CD8-positive, alpha-beta T cell (primary cell): ENCODE measurements at regions of chr11 and their contacts with region 1.

Region 1: DNA sequence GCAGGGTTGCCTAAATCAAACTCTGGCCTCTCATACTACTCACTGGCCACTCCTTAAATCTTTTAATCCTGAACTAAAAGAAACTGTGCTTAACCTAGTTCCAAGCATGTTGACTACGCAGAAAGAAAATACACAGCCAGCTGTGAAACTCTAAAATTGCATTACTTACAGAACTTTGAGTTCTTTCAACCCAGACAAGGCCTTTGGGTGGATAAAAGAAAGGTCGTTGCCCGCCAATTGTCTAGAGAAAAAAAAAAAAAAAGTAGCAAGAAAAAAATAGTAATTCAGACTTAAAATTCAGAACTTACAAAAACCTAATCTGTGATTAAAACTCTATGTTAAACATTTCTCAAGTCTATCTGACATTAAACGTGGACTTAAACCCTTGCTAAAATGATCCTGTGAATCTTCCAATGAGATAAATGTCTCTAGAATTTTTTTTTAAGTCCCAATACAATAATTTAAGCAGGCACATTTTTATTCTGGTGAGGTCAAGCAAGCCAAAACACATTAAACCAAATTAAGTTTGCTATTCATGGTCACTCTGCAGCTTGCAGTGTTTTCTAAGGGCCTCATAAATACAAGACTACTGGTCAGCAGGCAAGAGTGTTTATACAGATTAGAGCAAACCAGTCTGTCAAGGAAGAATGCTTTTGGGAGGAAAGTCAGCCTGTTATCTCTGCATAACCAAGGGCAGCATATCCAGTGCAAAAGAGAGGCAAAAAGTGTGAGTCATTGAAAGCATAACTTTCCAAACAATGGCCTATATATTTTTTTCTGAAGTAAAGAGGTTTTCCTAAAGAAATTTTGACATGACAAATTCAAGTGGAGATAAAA is 29.5 kb upstream of the CCDC34 start:
- DNase-seq: no peak
- ATAC-seq: no peak
- H3K4me3 ChIP-seq: no peak overlapping the region
- H3K4me3 Mint-ChIP-seq: no peak overlapping the region
- H3K27ac ChIP-seq: no peak overlapping the region
- H3K27ac Mint-ChIP-seq: no peak overlapping the region
- H3K4me1 ChIP-seq: no peaks in the 10 kb centered on the region
- H3K4me1 Mint-ChIP-seq: no peaks in the 10 kb centered on the region
- H3K27me3 ChIP-seq: no peaks in the 10 kb centered on the region
- H3K27me3 Mint-ChIP-seq: peaks cover 7% of the 10 kb centered on the region
- CTCF ChIP-seq: no peak

Region 2: DNA sequence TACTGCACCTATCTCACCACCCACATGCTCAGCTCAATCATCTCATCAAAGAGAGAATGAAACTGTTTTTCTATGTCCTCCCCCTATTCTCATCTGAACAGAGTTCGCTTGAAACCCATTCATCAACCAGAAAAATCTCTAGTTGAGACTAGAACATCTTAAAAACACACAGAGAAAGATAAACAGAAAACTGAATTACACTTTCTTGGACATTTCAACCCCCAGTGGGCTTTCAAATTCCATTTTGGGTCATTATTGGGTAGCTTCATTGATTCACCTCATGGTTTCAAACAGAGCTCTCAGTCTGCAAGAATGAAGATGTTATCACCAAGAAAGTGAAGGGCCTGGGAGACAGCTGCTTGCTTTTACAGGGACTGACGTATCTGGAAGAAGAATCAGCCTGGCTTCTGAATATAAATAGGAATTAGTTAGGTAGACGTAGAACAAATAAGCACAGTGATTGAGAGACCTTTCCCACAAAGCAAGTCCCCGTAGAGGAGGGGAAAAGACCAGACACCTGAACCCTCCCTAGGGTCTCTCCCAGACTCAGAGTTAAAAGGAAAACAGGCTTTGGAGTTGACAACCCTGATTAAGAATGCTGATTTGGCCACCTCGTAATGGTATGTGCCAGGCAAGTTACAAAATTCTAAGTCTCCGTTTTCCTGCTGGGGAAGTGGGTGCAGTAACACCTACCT is 196.1 kb before region 1 on chr11:
- CTCF ChIA-PET with region 1: no interaction called
- POLR2A ChIA-PET with region 1: no interaction called
- intact Hi-C with region 1: no loop called
- DNase-seq: no peak
- ATAC-seq: no peak
- H3K4me3 ChIP-seq: no peak overlapping the region
- H3K4me3 Mint-ChIP-seq: no peak overlapping the region
- H3K27ac ChIP-seq: no peak overlapping the region
- H3K27ac Mint-ChIP-seq: no peak overlapping the region
- H3K4me1 ChIP-seq: no peaks in the 10 kb centered on the region
- H3K4me1 Mint-ChIP-seq: no peaks in the 10 kb centered on the region
- H3K27me3 ChIP-seq: no peaks in the 10 kb centered on the region
- H3K27me3 Mint-ChIP-seq: peaks cover 3% of the 10 kb centered on the region
- CTCF ChIP-seq: no peak

Region 3: GRCh38 chr11:27456140-27456794 is 63.8 kb after region 1 on chr11:
- CTCF ChIA-PET with region 1: no interaction called
- POLR2A ChIA-PET with region 1: no interaction called
- intact Hi-C with region 1: loop called in 1 of 2 experiments (anchors 10 kb)
- DNase-seq: no peak
- ATAC-seq: no peak
- H3K4me3 ChIP-seq: no peak overlapping the region
- H3K4me3 Mint-ChIP-seq: no peak overlapping the region
- H3K27ac ChIP-seq: no peak overlapping the region
- H3K27ac Mint-ChIP-seq: no peak overlapping the region
- H3K4me1 ChIP-seq: no peaks in the 10 kb centered on the region
- H3K4me1 Mint-ChIP-seq: no peaks in the 10 kb centered on the region
- H3K27me3 ChIP-seq: no peaks in the 10 kb centered on the region
- H3K27me3 Mint-ChIP-seq: peaks cover 7% of the 10 kb centered on the region
- CTCF ChIP-seq: no peak